ENCODE measurements at regions of chr17 and their contacts with region 1.

Region 1: DNA sequence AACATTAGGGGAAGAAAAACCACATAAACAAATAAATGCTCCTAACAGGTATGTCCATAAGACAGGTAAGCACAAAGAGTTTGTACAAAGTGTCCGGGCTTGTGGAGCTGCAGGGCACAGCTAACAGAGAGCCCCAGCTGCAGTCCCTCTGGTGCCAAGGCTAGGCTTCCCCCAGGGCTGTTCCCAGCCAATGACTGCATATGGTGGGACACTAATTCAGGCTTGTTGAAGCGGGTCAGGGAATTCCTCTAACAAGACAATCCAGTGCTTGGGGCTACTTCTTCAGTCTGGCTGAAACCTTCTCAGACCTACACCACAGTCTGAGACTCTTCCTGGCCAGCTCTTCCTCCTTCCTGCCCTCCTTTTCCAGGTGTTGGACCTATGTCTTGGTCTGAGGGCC is 51.7 kb upstream of the ALDH3A1 start:
- DNase-seq: no peak
- ATAC-seq: no peak
- H3K4me3 ChIP-seq: no peak overlapping the region
- H3K27ac ChIP-seq: no peak overlapping the region
- H3K4me1 ChIP-seq: no peaks in the 10 kb centered on the region
- H3K27me3 ChIP-seq: no peaks in the 10 kb centered on the region
- CTCF ChIP-seq: no peak

Region 2: GRCh38 chr17:19703106-19703827 is 96.5 kb before region 1 on chr17:
- intact Hi-C with region 1: loop called in 1 of 3 experiments (anchors 10 kb)
- DNase-seq: no peak
- ATAC-seq: peak in 1 of 4 donors; percentile 7
- H3K4me3 ChIP-seq: no peak overlapping the region
- H3K27ac ChIP-seq: no peak overlapping the region
- H3K4me1 ChIP-seq: no peaks in the 10 kb centered on the region
- H3K27me3 ChIP-seq: no peaks in the 10 kb centered on the region
- CTCF ChIP-seq: no peak

Region 3: DNA sequence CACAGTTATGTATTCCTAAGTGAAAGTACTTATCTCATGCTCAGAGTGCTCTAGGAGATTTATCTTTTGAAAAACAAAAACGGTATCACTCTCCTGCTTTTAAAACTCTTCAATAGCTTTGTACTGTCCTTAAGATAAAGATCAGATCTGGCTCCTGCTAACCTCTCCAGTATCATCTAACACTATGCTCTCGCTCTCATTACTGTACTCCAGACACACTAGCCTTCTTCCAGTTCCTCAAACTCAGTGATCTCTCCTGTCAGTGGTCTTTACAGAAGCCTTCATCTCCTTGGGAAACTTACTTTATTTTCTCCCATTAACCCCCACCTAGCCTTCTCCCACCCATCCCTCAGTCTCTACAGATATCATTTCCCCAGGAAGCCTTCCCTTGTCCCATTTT is 57.8 kb after region 1 on chr17:
- intact Hi-C with region 1: no loop called
- DNase-seq: no peak
- ATAC-seq: no peak
- H3K4me3 ChIP-seq: no peak overlapping the region
- H3K27ac ChIP-seq: no peak overlapping the region
- H3K4me1 ChIP-seq: no peaks in the 10 kb centered on the region
- H3K27me3 ChIP-seq: no peaks in the 10 kb centered on the region
- CTCF ChIP-seq: no peak

Measured in pancreas (tissue), 10 donors.